K562 (cell line): ENCODE measurements at regions of chr6 and their contacts with region 1.

Region 1: DNA sequence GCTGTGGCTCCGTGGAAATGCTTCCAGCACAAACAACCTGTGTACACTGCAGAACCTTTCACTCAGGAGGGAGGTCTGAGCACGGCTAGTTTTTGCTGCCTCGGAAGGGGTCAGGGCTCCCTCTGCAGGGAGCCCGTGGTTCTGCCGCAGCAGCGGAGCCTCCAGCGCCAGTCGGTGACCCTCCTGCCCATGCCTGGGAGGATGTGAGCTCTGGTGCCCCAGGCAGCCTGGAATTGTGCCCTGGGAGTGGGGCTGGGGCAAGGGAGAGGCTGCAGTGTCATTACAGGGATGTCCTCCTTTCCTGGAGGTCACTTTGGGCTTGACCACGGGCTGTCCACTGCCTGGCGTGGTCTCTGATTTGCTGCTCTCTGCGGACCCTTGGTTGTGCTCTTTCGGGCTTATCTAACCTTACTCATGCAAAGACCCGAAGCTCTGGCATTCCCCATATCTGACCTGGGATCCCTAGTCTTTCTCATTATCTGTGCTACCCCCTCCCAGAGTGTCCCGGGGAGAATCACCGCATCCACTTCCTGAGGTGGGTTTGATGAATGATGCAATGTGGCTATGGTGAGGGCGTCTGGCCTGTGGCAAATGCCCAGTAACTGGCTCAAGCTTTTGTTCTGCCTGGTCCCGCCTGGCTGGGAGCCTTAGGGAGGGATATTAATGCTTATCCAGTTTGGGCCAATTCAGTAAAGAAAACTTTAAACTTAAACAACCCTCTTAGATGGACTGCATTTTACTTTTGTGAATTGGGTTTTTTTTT is 59.6 kb upstream of the TAGAP start:
- DNase-seq: peak; percentile 66 to 80 (median 75)
- ATAC-seq: peak; percentile 93
- H3K4me3 ChIP-seq: no peak overlapping the region
- H3K27ac ChIP-seq: no peak overlapping the region
- H3K4me1 ChIP-seq: peaks cover 0 to 10% of the 10 kb centered on the region in 2 experiments; a peak in 3 of 5 replicates
- H3K27me3 ChIP-seq: peaks cover 33 to 52% of the 10 kb centered on the region in 2 experiments
- CTCF ChIP-seq: peak; percentile 93 to 97 (median 96)
- EP300 ChIP-seq: no peak
- POLR2A ChIP-seq: no peak
- RAD21 ChIP-seq: peak; percentile 91 to 92

Region 2: DNA sequence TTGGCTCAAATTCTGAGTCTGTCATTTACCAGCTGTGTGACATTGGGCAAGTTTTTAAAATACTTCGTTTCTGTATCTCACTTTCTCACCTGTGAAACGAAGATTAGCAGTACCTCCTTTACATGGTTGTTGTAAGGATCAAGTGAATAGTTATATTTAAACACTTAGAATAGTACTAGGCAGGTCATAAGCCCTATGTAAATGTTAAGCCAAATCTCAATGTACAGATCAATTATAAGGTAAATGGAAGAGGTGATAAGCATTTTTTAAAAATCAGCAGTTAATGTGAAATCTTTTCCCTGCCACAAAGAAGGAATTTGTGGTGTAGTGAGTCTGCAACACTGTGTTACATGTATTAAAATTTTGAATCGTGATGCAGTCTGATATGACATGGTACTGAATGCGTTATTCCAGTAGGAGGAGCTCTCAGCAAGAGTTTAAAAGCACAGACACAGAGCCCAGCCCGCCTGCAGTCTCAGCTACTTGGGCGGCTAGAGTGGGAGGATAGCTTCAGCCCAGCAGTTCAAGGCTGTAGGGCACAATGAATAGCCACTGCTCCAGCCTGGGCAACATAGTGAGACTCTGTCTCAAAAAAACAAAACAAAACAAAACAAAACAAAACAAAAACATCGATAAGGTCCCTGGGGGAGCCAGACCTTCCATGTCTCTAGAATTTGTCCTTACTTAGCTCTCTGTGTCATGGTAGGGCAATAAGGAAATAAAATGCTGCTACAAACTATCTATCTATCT is 890.2 kb before region 1 on chr6:
- CTCF ChIA-PET with region 1: no interaction called
- POLR2A ChIA-PET with region 1: no interaction called
- in situ Hi-C with region 1: loop called (anchors 5 kb)
- intact Hi-C with region 1: no loop called
- DNase-seq: peak; percentile 56 to 87 (median 64)
- ATAC-seq: peak; percentile 100
- H3K4me3 ChIP-seq: no peak overlapping the region
- H3K27ac ChIP-seq: no peak overlapping the region
- H3K4me1 ChIP-seq: peaks cover 3% of the 10 kb centered on the region in 2 experiments; a peak in 2 of 5 replicates
- H3K27me3 ChIP-seq: no peaks in the 10 kb centered on the region
- CTCF ChIP-seq: peak; percentile 84 to 94 (median 89)
- EP300 ChIP-seq: no peak
- POLR2A ChIP-seq: no peak
- RAD21 ChIP-seq: peak; percentile 84 to 95

Region 3: DNA sequence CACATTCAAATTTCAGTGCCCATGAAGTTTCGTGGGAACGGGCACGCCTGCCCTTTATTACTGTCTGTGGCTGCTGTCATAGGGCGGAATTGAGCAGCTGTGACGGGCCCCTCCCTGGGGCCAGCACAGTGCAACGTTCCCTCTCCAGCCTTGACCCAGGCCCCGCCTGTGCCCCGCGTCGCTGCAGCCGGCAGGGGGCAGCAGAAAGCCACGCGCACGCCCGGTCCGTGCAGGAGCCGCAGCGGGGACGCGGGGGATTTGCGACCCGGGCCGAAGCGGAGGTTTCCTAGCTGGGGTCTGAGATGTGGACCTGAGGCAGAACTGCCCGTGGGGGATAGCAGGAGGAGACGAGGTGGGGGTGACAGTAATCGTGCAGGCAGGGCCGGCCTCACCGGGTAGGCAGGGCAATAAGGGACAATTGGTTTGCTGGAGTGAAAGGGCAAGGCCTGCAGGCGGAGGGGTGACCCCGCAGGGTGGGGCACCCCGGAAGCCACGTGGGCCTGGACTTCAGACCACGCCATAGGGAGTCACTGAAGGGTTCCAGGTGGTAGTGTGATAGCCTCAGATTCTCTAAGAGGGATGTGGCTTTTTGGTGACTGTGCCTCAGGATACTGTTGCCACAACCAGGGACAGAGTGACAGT is 400.0 kb before region 1 on chr6:
- CTCF ChIA-PET with region 1: interaction called, 12 read pairs
- POLR2A ChIA-PET with region 1: interaction called, 3 read pairs
- in situ Hi-C with region 1: loop called (anchors 25 kb)
- intact Hi-C with region 1: loop called (anchors 2 kb)
- DNase-seq: peak; percentile 92 to 95 (median 94)
- ATAC-seq: peak; percentile 98
- H3K4me3 ChIP-seq: peak overlapping the region; percentile 36
- H3K27ac ChIP-seq: peak overlapping the region; percentile 45; the same call in 2 of the 3 replicates
- H3K4me1 ChIP-seq: peaks cover 26 to 35% of the 10 kb centered on the region in 2 experiments
- H3K27me3 ChIP-seq: peaks cover 0 to 15% of the 10 kb centered on the region in 2 experiments; a peak in 3 of 5 replicates
- CTCF ChIP-seq: peak; percentile 97 to 98 (median 97)
- EP300 ChIP-seq: no peak; the same call in 1 of the 2 replicates
- POLR2A ChIP-seq: no peak
- RAD21 ChIP-seq: peak; percentile 99

Region 4: GRCh38 chr6:158803733-158804143 is 300.6 kb before region 1 on chr6:
- CTCF ChIA-PET with region 1: no interaction called
- POLR2A ChIA-PET with region 1: no interaction called
- in situ Hi-C with region 1: no loop called
- intact Hi-C with region 1: loop called (anchors 10 kb)
- DNase-seq: no peak
- ATAC-seq: peak; percentile 31; the same call in 2 of the 3 replicates
- H3K4me3 ChIP-seq: no peak overlapping the region
- H3K27ac ChIP-seq: peak overlapping the region; percentile 7; the same call in 1 of the 3 replicates
- H3K4me1 ChIP-seq: peaks cover 11 to 25% of the 10 kb centered on the region in 2 experiments; a peak in 4 of 5 replicates
- H3K27me3 ChIP-seq: no peaks in the 10 kb centered on the region
- CTCF ChIP-seq: no peak
- EP300 ChIP-seq: no peak
- POLR2A ChIP-seq: no peak
- RAD21 ChIP-seq: 0 out of 4 replicates have a peak, but pooled peaks of 1 of the 2 experiments have one; percentile 9

Region 5: DNA sequence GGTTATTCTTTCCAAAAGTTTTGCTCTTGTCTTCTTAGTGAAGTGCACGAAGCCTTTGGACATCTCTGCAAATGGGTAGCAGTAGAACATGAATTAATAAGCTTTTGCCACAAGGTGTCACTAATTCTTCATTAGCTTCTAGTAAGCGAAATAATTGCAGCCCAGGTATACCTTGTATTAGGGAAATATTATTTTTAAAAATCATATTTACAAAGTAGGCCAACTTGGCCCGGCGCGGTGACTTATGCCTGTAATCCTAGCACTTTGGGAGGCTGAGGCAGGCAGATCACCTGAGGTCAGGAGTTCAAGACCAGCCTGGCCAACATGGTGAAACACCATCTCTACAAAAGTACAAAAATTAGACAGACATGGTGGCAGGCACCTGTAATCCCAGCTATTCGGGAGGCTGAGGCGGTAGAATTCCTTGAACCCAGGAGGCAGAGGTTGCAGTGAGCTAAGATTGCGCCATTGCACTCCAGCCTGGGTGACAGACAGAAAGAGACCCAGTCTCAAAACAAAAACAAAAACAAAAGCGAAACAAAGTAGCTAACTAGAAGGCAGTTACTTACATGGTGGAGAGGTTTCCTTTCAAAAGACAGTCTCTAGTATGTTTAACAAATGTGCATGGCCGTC is 95.6 kb before region 1 on chr6:
- CTCF ChIA-PET with region 1: interaction called, 3 read pairs
- POLR2A ChIA-PET with region 1: no interaction called
- in situ Hi-C with region 1: loop called (anchors 5 kb)
- intact Hi-C with region 1: loop called (anchors 1 kb)
- DNase-seq: peak in 2 of 4 experiments; percentile 31 to 35
- ATAC-seq: peak; percentile 61
- H3K4me3 ChIP-seq: no peak overlapping the region
- H3K27ac ChIP-seq: no peak overlapping the region
- H3K4me1 ChIP-seq: peaks cover 7 to 8% of the 10 kb centered on the region in 2 experiments; a peak in 3 of 5 replicates
- H3K27me3 ChIP-seq: peaks cover 15 to 22% of the 10 kb centered on the region in 2 experiments; a peak in 3 of 5 replicates
- CTCF ChIP-seq: peak; percentile 46 to 70 (median 50); a peak in 4 of 6 replicates
- EP300 ChIP-seq: no peak
- POLR2A ChIP-seq: no peak
- RAD21 ChIP-seq: peak; percentile 65 to 72